Ascending aorta (tissue), 2 donors: ENCODE measurements at regions of chr12 and their contacts with region 1.

Region 1: DNA sequence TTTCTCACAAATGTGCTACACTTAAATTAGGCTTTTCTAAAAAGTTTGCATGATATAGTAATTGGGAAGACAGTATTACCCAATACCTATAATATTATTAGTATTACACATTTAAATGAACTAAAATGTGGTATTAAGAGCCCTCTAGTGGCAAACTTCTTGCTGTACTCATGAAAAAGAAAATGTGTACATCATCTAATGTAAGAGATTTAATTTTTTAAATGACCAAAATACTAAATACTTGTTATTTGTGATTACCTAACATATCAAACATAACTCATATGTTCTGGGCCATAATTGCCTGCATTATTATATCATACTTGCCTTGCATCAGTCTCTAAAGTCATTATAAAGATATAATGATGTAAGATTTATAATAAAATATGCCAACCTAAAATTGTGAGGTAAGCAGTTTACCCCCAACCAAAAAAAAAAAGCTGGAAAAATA is 64.2 kb downstream of the DNAI7 start:
- DNase-seq: no peak
- H3K4me3 ChIP-seq: no peak overlapping the region
- H3K27ac ChIP-seq: no peak overlapping the region
- H3K4me1 ChIP-seq: no peaks in the 10 kb centered on the region
- H3K27me3 ChIP-seq: no peaks in the 10 kb centered on the region
- CTCF ChIP-seq: peak; percentile 42 to 65 (median 57)

Region 2: DNA sequence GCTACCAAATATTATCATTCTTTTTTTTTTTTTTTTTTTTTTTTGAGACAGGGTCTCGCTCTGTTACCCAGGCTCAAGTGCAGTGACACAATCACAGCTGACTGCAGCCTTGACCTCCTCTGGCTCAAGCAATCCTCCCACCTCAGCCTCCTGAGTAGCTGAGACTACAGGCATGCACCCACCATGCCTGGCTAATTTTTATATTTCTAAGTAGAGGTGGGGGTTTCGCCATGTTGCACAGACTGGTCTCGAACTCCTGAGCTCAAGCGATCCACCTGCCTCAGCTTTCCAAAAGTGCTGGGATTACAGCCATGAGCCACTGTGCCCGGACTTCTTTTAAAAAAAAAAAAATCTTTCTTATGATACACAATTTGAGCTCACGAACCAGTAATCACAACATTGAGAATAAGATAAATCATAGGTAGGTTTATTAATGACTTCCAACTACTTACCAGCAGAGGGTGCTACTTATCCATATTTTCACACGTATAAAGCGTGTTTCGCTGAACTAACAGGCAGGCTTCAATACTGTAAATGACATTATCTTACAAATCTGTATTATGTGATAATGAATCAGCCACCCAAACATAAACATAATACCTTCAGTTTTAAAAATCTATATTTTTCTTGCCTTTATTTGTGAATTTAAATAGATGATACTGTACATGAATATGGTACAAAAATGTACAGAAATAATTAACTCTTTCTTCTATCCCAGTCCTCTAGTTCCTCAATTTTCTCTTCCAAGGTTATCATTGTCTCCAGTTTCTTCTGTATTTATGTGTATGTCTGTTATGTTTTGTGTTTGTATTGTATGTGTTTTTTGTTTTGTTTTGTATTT is 139.3 kb before region 1 on chr12:
- intact Hi-C with region 1: loop called (anchors 1 kb)
- DNase-seq: no peak
- H3K4me3 ChIP-seq: no peak overlapping the region
- H3K27ac ChIP-seq: no peak overlapping the region
- H3K4me1 ChIP-seq: no peaks in the 10 kb centered on the region
- H3K27me3 ChIP-seq: no peaks in the 10 kb centered on the region
- CTCF ChIP-seq: peak; percentile 55 to 66 (median 64)

Region 3: DNA sequence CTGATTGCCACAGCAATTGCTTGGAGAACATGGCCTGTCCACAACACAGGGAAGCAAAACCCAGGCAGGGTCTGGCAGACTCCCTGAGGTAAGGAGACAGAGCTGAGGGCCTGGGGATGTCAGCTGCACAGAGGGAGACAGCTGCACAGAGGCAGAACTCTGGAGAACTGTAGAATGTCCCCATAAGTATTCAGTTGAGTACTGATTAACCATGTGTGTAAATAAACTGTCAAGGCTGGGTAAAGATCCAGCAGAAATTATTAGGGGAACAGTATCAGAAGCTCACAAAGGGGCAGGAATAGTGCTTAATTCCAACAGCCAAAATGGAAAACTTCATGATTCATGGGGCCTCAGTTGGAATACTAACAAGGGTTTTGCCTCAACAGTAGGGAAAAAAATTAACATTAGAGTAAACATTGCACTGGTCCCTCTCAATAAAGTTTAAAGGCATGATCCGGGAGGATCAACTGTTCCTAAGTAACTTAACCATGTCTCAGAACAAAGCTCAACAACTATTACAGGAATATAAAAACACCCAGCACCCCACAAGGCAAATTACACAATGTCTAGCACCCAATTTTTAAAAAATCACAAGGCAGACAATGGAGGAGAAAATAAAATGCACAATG is 626.4 kb after region 1 on chr12:
- intact Hi-C with region 1: no loop called
- DNase-seq: no peak
- H3K4me3 ChIP-seq: no peak overlapping the region
- H3K27ac ChIP-seq: no peak overlapping the region
- H3K4me1 ChIP-seq: no peaks in the 10 kb centered on the region
- H3K27me3 ChIP-seq: no peaks in the 10 kb centered on the region
- CTCF ChIP-seq: no peak